ENCODE measurements at regions of chr2 and their contacts with region 1.

Region 1: DNA sequence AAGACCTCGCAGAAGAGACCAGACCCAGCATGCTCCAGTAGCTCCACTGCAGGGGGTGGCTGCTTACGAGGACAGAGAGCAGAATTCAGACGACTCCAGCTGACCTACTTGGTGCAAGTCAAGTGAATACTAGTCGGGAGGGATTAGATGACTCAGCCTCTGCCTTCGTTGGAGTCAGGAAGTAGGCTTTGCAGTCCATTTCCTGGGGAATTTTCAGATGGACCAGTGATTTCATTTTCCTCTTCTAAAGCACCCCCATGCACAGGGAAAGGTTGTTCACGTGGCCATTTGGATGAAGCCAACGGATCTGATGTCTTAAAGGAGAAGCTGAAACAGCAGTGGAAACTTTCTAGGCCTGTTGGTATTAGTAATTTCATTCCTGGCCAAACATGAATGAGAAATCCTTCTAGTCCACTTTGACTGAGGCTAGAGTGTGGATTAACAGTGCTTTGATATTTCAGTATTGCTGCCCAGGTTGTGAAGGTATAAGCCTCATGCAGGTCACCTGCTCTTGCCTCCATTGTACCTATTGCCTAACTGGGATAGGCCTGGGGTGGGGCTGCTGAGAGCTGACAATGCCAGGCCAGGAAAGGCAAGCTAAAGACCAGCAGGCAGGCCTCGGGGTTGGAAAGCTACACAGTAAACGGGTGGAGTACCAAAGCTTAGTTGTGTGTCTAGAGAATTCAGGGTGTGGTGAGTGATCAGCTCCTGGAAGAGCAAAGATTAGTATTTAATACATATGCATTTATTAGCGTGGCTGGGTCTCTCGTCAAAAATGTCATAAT is 117.6 kb upstream of the FOSL2 start:
- DNase-seq: no peak

Region 2: DNA sequence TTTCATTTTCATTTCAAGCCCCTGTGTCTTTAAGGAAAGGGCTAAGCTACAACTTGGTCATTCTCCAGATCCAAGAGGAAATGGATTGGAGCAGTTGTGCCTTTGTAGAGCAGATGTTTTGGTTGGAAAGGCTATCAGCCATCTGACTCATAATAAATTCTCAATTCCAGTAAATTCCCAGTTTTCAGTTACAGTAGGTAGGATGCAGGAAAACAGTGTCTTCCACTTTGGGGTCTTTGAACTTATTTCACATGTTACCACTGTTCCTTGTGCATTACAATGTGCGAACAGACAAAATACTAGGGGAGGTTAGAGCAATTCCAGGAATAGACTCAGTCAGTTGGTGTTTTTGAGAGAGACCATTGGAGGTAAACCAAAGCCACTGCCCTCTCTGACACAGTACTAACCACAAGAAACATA is 172.6 kb before region 1 on chr2:
- intact Hi-C with region 1: loop called (anchors 5 kb)
- DNase-seq: no peak

Measured in cardiac septum (tissue), 1 donor.